GM12878 (cell line): ENCODE measurements at regions of chr13 and their contacts with region 1.

Region 1: GRCh38 chr13:20525690-20526544 is at the start of gene CRYL1:
- DNase-seq: peak; percentile 40
- ATAC-seq: peak; percentile 96
- H3K4me3 ChIP-seq: peak within 1 kb of the TSS; percentile 74
- H3K27ac ChIP-seq: peak within 1 kb of the TSS; percentile 73
- H3K4me1 ChIP-seq: peaks cover 10% of the 10 kb centered on the region
- H3K27me3 ChIP-seq: no peaks in the 10 kb centered on the region
- CTCF ChIP-seq: no peak
- EP300 ChIP-seq: no peak
- POLR2A ChIP-seq: peak; percentile 86
- RAD21 ChIP-seq: no peak
- polyA plus RNA-seq, gene CRYL1: 5.5 to 7.9 TPM

Region 2: GRCh38 chr13:20546556-20546955 is 20.6 kb after region 1 on chr13:
- CTCF ChIA-PET with region 1: no interaction called
- POLR2A ChIA-PET with region 1: no interaction called
- RAD21 ChIA-PET with region 1: interaction called, 5 read pairs
- SMC1A ChIA-PET with region 1: interaction called, 9 read pairs
- in situ Hi-C with region 1: no loop called
- intact Hi-C with region 1: loop called (anchors 2 kb)
- DNase-seq: no peak
- ATAC-seq: peak; percentile 45; the same call in 1 of the 3 replicates
- H3K4me3 ChIP-seq: no peak overlapping the region
- H3K27ac ChIP-seq: no peak overlapping the region
- H3K4me1 ChIP-seq: no peaks in the 10 kb centered on the region
- H3K27me3 ChIP-seq: no peaks in the 10 kb centered on the region
- CTCF ChIP-seq: no peak
- EP300 ChIP-seq: no peak
- POLR2A ChIP-seq: no peak
- RAD21 ChIP-seq: no peak

Region 3: DNA sequence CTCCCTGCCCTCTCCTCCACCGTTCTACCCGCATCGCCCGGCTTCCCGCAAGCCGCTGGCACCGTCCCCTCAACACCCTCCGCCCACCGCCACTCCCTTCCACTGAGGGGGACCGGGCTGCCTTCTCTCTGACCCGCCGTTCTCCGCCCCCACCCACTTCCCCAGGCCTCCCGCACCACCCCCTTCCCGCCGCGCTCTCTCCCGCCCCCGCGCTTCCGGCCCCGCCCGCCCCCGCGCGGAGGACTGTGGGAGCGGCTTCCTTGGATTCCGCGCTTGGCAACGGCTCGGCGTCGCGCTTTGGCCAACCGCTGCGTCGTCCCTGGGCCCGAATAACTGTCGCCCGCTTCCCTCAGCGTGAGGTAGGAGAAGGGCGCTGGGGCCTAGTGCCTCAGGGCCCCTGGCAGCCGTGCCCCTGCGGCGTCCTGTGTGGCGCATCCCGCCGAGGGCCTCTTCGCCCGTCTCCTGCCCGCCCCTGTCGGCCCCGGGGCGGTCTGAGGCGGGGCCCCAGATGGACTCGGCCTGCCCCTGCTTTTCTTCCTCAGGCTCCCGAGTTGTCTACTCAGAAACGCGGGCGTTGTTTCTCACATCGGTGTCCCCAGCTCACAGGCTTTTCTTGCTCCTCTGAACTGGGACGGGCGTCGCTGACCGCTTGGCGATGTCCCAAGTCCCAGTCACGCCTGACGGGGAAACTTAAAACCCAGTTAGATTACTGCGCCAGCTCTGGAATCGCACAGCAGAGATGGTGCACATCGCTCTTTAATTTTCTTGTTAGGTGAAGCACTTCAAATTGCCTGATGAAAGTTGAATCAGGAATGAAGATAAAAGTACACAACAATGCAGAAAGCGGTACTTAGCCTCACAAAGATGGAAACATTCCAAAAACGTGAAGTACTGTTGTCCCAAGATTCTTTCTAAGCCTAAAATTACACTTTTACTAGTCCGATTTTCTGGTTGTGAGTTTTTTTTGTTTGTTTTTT is 41.3 kb after region 1 on chr13 and contains the start of gene IFT88:
- CTCF ChIA-PET with region 1: no interaction called
- POLR2A ChIA-PET with region 1: interaction called, 3 read pairs
- RAD21 ChIA-PET with region 1: interaction called, 3 read pairs
- SMC1A ChIA-PET with region 1: interaction called, 13 read pairs
- in situ Hi-C with region 1: no loop called
- intact Hi-C with region 1: loop called (anchors 2 kb)
- DNase-seq: peak; percentile 48
- ATAC-seq: peak; percentile 96
- H3K4me3 ChIP-seq: peak within 1 kb of the TSS; percentile 82
- H3K27ac ChIP-seq: peak within 1 kb of the TSS; percentile 72
- H3K4me1 ChIP-seq: no peaks in the 10 kb centered on the region; the same call in 1 of the 2 replicates
- H3K27me3 ChIP-seq: no peaks in the 10 kb centered on the region
- CTCF ChIP-seq: no peak
- EP300 ChIP-seq: no peak
- POLR2A ChIP-seq: peak; percentile 89
- RAD21 ChIP-seq: no peak
- polyA plus RNA-seq, gene IFT88: 3.3 to 3.8 TPM

Region 4: DNA sequence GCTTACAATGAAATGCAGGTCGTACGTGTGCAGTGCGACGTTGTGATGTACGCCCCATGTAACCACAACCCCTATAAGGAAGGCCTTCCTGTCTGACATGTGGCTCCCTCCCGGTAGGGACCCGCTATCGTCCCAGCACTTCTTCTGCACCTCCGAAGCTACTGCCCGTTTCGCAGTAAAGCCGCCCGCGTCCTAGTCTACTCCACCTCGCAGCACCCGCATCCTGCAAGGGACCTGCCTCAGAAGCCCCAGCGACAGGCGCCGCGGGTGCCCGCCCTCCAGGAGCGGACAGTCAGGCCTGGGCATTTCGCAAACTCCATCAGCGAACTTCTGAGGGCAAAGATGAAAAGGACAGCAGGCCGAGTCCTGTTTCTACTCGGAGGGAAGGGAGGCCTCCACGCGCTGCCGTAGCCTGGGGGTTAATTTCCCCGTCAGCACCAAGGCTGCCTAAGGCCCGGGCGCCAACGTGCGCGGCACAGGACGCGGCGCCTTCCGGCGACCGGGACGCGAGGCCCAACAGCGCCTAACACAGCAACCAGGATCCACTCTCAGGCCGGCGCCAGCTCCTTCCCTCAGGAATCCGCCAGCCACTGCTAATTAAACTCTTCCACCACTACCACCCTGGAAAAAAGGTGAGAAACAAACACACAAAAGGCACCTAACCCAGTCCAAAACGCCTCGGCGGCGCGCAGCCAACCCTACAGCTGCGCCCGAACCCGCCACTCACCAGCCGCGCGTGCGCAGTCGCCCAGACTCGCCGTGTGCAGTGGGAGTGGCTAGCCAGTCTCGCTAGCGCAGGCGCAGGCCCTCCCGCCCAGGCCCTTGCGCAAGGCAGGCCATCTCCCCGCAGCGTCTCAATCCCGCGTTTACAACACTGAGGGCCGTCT is 247.5 kb after region 1 on chr13 and contains the start of gene EEF1AKMT1:
- CTCF ChIA-PET with region 1: no interaction called
- POLR2A ChIA-PET with region 1: interaction called, 3 read pairs
- RAD21 ChIA-PET with region 1: interaction called, 4 read pairs
- SMC1A ChIA-PET with region 1: no interaction called
- in situ Hi-C with region 1: no loop called
- intact Hi-C with region 1: loop called (anchors 2 kb)
- DNase-seq: peak; percentile 79
- ATAC-seq: peak; percentile 95
- H3K4me3 ChIP-seq: peak within 1 kb of the TSS; percentile 64
- H3K27ac ChIP-seq: peak within 1 kb of the TSS; percentile 82
- H3K4me1 ChIP-seq: peaks cover 4% of the 10 kb centered on the region; the same call in 1 of the 2 replicates
- H3K27me3 ChIP-seq: no peaks in the 10 kb centered on the region
- CTCF ChIP-seq: no peak
- EP300 ChIP-seq: no peak
- POLR2A ChIP-seq: peak; percentile 85
- RAD21 ChIP-seq: no peak
- polyA plus RNA-seq, gene EEF1AKMT1: 42.8 to 44.5 TPM